Left lung (tissue), 14 donors: ENCODE measurements at regions of chr3 and their contacts with region 1.

Region 1: GRCh38 chr3:136752422-136753325 is 496 bp upstream of the STAG1 start:
- DNase-seq: peak; percentile 99 to 100 (median 100)
- ATAC-seq: peak; percentile 92
- H3K4me3 ChIP-seq: peak overlapping the region; percentile 51 to 54
- H3K27ac ChIP-seq: peak overlapping the region; percentile 92 to 100
- H3K4me1 ChIP-seq: peaks cover 24 to 47% of the 10 kb centered on the region in 2 donors
- H3K27me3 ChIP-seq: no peaks in the 10 kb centered on the region
- CTCF ChIP-seq: peak in 1 of 2 donors; percentile 97

Region 2: GRCh38 chr3:136075218-136075808 is 677.4 kb before region 1 on chr3:
- intact Hi-C with region 1: loop called in 1 of 2 experiments (anchors 5 kb)
- DNase-seq: peak in 3 of 4 donors; percentile 45 to 89 (median 83)
- ATAC-seq: peak; percentile 95
- H3K4me3 ChIP-seq: no peak overlapping the region
- H3K27ac ChIP-seq: no peak overlapping the region
- H3K4me1 ChIP-seq: peaks cover 4 to 6% of the 10 kb centered on the region in 2 donors
- H3K27me3 ChIP-seq: no peaks in the 10 kb centered on the region
- CTCF ChIP-seq: peak; percentile 75 to 89

Region 3: DNA sequence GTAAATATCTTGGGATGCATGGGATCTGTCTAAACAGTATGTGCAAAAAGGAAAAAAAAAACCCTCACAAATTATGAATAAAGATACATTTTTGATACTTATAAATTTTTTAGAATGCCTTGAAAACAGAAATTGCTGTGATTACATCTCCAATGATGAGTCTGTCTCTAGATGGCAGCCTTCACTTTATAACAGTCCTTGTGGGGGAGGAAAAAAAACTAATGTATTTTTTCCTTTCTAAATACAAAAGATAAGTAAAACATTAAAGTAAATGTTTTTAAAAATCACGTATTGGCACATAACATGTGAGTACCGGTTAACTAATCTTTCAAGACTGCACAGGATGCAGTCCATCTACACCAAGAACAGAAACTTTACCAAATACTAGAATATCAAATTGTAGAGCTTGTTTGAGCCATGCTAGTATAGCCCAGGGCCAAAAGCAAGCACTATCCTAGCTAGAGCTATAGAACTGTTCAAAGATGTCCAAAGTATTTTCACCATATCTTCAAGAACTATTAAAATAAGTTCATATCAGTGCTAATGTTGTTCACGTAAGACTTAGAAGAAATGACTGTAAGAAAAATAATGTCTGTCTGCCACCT is 206.9 kb before region 1 on chr3:
- intact Hi-C with region 1: loop called in 1 of 2 experiments (anchors 5 kb)
- DNase-seq: peak in 2 of 4 donors; percentile 12 to 21
- ATAC-seq: peak; percentile 64
- H3K4me3 ChIP-seq: no peak overlapping the region
- H3K27ac ChIP-seq: no peak overlapping the region
- H3K4me1 ChIP-seq: peaks cover 0 to 47% of the 10 kb centered on the region in 2 donors
- H3K27me3 ChIP-seq: no peaks in the 10 kb centered on the region
- CTCF ChIP-seq: peak in 1 of 2 donors; percentile 15

Region 4: GRCh38 chr3:136559896-136560295 is 192.8 kb before region 1 on chr3:
- intact Hi-C with region 1: no loop called
- DNase-seq: no peak
- ATAC-seq: peak; percentile 69
- H3K4me3 ChIP-seq: no peak overlapping the region
- H3K27ac ChIP-seq: peak overlapping the region in 1 of 2 donors; percentile 2
- H3K4me1 ChIP-seq: no peaks in the 10 kb centered on the region
- H3K27me3 ChIP-seq: no peaks in the 10 kb centered on the region
- CTCF ChIP-seq: no peak

Region 5: GRCh38 chr3:136862617-136863300 is 110.1 kb after region 1 on chr3:
- intact Hi-C with region 1: no loop called
- DNase-seq: peak; percentile 53 to 87 (median 70)
- ATAC-seq: peak; percentile 75
- H3K4me3 ChIP-seq: peak overlapping the region; percentile 86 to 90
- H3K27ac ChIP-seq: peak overlapping the region; percentile 96 to 98
- H3K4me1 ChIP-seq: peaks cover 0 to 36% of the 10 kb centered on the region in 2 donors
- H3K27me3 ChIP-seq: no peaks in the 10 kb centered on the region
- CTCF ChIP-seq: no peak

Region 6: GRCh38 chr3:137013955-137014688 is 261.4 kb after region 1 on chr3:
- intact Hi-C with region 1: loop called in 1 of 2 experiments (anchors 5 kb)
- DNase-seq: peak; percentile 89 to 93 (median 92)
- ATAC-seq: peak; percentile 99
- H3K4me3 ChIP-seq: peak overlapping the region; percentile 23 to 37
- H3K27ac ChIP-seq: peak overlapping the region in 1 of 2 donors; percentile 1
- H3K4me1 ChIP-seq: peaks cover 0 to 7% of the 10 kb centered on the region in 2 donors
- H3K27me3 ChIP-seq: no peaks in the 10 kb centered on the region
- CTCF ChIP-seq: peak; percentile 87 to 89